Vagina (tissue), 2 donors: ENCODE measurements at regions of chr4 and their contacts with region 1.

Region 1: DNA sequence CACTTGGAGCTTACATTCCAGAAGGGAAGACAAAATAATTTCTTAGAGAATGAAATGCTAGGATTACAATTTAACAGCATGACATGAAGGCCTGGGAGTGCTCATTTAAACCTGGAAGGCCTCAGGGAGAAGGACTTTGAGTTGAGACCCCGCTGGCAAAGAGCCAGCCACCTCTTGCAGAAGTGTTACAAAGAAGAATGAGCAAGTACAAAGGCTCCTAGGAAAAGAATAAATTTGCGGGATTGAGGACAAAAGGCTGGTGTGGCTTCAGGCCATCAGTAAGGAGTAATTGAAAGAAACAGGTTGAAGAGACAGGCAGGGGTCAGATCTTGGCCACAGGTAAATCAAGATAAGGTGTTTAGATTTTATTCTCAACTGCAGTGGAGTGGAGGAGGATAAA is 3.1 kb upstream of the ELOVL6 start:
- DNase-seq: no peak
- H3K4me3 ChIP-seq: no peak overlapping the region
- H3K27ac ChIP-seq: no peak overlapping the region
- H3K4me1 ChIP-seq: peaks cover 6% of the 10 kb centered on the region
- H3K27me3 ChIP-seq: no peaks in the 10 kb centered on the region
- CTCF ChIP-seq: no peak
- POLR2A ChIP-seq: no peak

Region 2: GRCh38 chr4:110049951-110050925 is 151.3 kb before region 1 on chr4:
- intact Hi-C with region 1: loop called (anchors 10 kb)
- DNase-seq: no peak
- H3K4me3 ChIP-seq: no peak overlapping the region
- H3K27ac ChIP-seq: no peak overlapping the region
- H3K4me1 ChIP-seq: no peaks in the 10 kb centered on the region
- H3K27me3 ChIP-seq: no peaks in the 10 kb centered on the region
- CTCF ChIP-seq: peak; percentile 52 to 65 (median 62)
- POLR2A ChIP-seq: no peak